Activated naive CD4-positive, alpha-beta T cell treated with anti-CD3 and anti-CD28 coated beads for 36 hours (primary cell): ENCODE measurements at regions of chr17 and their contacts with region 1.

Region 1: DNA sequence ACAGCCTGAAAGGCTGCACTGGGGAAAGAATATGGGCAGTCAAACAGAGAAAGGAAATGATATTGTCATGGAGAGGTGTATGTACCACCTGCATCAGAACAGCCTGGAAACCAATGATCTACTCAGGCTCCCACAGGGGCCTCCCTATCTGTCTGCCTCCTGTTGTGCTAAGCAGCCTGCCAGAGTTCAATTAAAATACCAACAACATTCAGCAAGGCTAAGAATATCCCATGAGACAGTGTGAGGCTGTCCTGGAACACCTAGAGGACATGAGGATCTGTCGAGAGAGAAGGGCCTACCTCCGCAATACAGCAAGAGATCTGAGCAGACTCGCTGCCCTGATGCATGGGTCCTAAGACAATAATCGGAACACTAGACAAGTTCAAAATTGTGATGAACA is 8.4 kb downstream of the FXR2 start:
- DNase-seq: no peak
- H3K4me3 Mint-ChIP-seq: no peak overlapping the region
- H3K27ac Mint-ChIP-seq: no peak overlapping the region
- H3K4me1 Mint-ChIP-seq: peaks cover 16% of the 10 kb centered on the region
- H3K27me3 Mint-ChIP-seq: no peaks in the 10 kb centered on the region

Region 2: GRCh38 chr17:7014261-7014994 is 591.9 kb before region 1 on chr17:
- CTCF ChIA-PET with region 1: no interaction called
- intact Hi-C with region 1: no loop called
- DNase-seq: peak; percentile 98
- H3K4me3 Mint-ChIP-seq: peak overlapping the region; percentile 93
- H3K27ac Mint-ChIP-seq: peak overlapping the region; percentile 100
- H3K4me1 Mint-ChIP-seq: peaks cover 50% of the 10 kb centered on the region
- H3K27me3 Mint-ChIP-seq: no peaks in the 10 kb centered on the region

Region 3: DNA sequence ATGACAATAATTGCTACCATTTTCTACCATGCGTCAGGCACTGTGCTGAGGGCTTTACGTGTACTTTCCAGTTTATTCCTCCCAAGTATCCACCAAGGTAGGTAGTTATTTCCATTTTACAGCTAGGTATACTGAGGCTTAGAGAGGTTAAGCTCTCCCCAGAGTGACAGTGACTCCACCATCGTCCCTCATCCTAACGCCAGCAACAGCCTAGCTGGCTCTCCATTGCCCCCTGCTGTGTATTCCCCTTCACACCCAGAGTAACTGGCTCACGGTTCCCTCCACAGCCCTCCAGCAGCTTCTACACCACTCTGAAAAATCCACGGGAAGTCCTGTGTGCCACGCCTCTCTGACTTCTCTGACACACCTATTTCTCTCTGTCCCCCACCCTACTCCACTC is 420.0 kb before region 1 on chr17:
- CTCF ChIA-PET with region 1: no interaction called
- intact Hi-C with region 1: no loop called
- DNase-seq: no peak
- H3K4me3 Mint-ChIP-seq: no peak overlapping the region
- H3K27ac Mint-ChIP-seq: no peak overlapping the region
- H3K4me1 Mint-ChIP-seq: no peaks in the 10 kb centered on the region
- H3K27me3 Mint-ChIP-seq: no peaks in the 10 kb centered on the region

Region 4: DNA sequence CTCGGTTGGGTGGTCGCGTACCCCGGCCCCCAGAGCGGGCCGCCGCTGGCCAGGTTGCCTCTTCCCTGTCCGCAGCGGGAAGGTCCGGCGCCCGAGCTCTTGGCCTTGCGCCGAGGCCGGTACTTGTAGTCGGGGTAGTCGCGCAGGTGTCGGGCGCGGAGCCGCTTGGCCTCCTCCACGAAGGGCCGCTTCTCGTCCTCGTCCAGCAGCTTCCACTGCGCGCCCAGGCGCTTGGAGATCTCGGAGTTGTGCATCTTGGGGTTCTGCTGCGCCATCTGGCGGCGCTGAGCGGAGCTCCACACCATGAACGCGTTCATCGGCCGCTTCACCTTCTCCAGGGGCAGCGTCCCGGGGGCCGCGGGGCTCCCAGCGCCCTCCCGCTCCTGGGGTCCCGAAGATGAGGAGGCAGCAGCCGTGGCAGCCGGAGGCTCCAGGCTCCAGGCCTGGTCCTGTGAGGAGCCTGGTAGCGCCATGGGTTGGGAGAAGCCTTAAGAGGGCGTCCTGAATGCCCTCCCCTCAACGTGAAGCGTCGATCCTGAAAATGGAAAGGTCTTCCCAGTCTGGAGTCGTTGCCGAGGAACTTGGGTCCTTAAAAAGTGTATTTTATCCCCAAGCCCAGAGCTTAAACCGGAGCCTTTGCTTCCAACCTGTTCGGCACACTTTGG is 16.9 kb before region 1 on chr17:
- CTCF ChIA-PET with region 1: interaction called, 14 read pairs
- intact Hi-C with region 1: no loop called
- DNase-seq: peak; percentile 74
- H3K4me3 Mint-ChIP-seq: no peak overlapping the region
- H3K27ac Mint-ChIP-seq: no peak overlapping the region
- H3K4me1 Mint-ChIP-seq: peaks cover 21% of the 10 kb centered on the region
- H3K27me3 Mint-ChIP-seq: no peaks in the 10 kb centered on the region